ENCODE measurements at regions of chr3 and their contacts with region 1.

Region 1: GRCh38 chr3:49673715-49674496 is at the start of gene APEH:
- DNase-seq: peak; percentile 92 to 98 (median 96)
- ATAC-seq: peak; percentile 86
- H3K4me3 ChIP-seq: peak within 1 kb of the TSS; percentile 81
- H3K4me3 Mint-ChIP-seq: peak within 1 kb of the TSS; percentile 97
- H3K27ac ChIP-seq: peak within 1 kb of the TSS; percentile 91 to 96
- H3K27ac Mint-ChIP-seq: peak within 1 kb of the TSS; percentile 97
- H3K4me1 ChIP-seq: peaks cover 47% of the 10 kb centered on the region
- H3K4me1 Mint-ChIP-seq: peaks cover 50% of the 10 kb centered on the region
- H3K27me3 ChIP-seq: no peaks in the 10 kb centered on the region
- H3K27me3 Mint-ChIP-seq: no peaks in the 10 kb centered on the region
- CTCF ChIP-seq: no peak
- total RNA-seq, gene APEH: 44.3 to 45.5 TPM

Region 2: DNA sequence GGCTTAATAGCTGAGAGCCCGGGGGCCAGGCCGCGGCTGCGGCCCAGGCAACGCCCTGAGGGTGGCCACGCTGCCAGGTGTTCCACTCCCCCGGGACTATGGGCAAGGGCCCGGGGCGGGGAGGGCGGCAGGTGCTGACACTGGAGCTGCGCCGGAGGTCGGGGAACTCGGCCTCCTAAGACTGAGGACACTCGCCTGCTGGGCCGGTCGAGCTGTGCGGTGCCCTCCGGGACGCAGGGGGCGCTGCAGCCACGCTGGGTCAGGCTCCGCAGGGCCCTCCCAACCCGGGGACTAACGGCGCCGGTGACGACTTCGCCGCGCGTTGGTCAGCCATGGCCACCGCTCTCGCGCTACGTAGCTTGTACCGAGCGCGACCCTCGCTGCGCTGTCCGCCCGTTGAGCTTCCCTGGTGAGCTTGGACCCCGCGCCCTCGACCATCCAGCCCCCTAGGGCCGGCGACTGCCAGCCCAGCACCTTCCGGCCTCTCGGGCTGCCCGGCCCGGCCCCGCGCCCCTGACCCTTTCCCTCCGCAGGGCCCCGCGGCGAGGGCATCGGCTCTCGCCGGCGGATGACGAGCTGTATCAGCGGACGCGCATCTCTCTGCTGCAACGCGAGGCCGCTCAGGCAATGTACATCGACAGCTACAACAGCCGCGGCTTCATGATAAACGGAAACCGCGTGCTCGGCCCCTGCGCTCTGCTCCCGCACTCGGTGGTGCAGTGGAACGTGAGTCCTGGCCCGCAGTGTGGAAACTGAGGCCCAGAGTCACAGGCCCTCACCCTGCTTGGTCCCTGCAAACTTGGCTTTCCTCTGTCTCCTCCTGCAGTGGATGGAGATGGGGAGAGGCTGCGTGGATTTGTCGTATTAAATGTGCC is 651.9 kb before region 1 on chr3 and contains the start of gene NDUFAF3:
- CTCF ChIA-PET with region 1: no interaction called
- POLR2A ChIA-PET with region 1: no interaction called
- intact Hi-C with region 1: loop called in 1 of 2 experiments (anchors 10 kb)
- DNase-seq: peak; percentile 81 to 95 (median 90)
- ATAC-seq: peak; percentile 74
- H3K4me3 ChIP-seq: peak within 1 kb of the TSS; percentile 80
- H3K4me3 Mint-ChIP-seq: peak within 1 kb of the TSS; percentile 95
- H3K27ac ChIP-seq: peak within 1 kb of the TSS; percentile 92 to 98
- H3K27ac Mint-ChIP-seq: peak within 1 kb of the TSS; percentile 90
- H3K4me1 ChIP-seq: peaks cover 63% of the 10 kb centered on the region
- H3K4me1 Mint-ChIP-seq: peaks cover 50% of the 10 kb centered on the region
- H3K27me3 ChIP-seq: no peaks in the 10 kb centered on the region
- H3K27me3 Mint-ChIP-seq: no peaks in the 10 kb centered on the region
- CTCF ChIP-seq: peak; percentile 99
- total RNA-seq, gene NDUFAF3: 52.7 to 53.2 TPM

Region 3: DNA sequence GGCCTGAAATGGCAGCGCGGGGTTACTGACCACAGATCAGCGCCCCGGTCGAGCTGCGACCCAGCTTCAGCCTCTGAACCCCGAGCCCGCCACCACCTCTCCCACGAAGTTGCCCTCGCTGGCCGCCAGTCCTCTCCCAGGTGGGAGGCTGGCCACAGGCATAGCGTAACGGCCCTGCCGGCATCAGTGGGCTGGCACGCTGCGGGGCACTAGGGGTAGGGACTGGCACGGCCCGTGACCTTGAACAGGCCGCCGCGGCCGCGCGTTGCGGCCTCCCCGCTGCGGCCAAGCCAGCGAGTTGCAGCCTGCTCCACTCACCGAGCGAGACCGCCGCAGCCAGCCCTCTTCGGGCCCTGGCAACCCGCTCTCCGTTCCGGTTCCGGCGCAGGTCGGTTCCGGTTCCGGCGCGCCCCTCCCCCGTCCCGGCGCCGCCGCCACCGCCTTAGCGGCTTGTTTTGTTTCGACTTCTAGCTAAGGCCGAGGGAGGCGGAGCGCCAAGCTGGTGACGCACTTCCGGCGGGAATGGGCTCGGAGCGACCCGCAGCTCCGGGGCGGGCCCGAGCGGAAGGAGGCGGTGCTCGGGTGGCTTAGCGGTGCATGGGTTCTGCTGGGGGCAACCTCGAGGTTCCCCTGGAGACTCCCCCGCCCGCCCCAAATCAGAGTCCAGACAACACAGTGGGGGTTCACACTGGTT is 553.3 kb before region 1 on chr3 and contains the start of gene USP19:
- CTCF ChIA-PET with region 1: no interaction called
- POLR2A ChIA-PET with region 1: no interaction called
- intact Hi-C with region 1: loop called in 1 of 2 experiments (anchors 10 kb)
- DNase-seq: peak; percentile 86 to 98 (median 94)
- ATAC-seq: peak; percentile 91
- H3K4me3 ChIP-seq: peak within 1 kb of the TSS; percentile 99
- H3K4me3 Mint-ChIP-seq: peak within 1 kb of the TSS; percentile 93
- H3K27ac ChIP-seq: peak within 1 kb of the TSS; percentile 87 to 95
- H3K27ac Mint-ChIP-seq: peak within 1 kb of the TSS; percentile 95
- H3K4me1 ChIP-seq: peaks cover 30% of the 10 kb centered on the region
- H3K4me1 Mint-ChIP-seq: peaks cover 23% of the 10 kb centered on the region
- H3K27me3 ChIP-seq: no peaks in the 10 kb centered on the region
- H3K27me3 Mint-ChIP-seq: no peaks in the 10 kb centered on the region
- CTCF ChIP-seq: no peak
- total RNA-seq, gene USP19: 84.9 to 86.2 TPM

Region 4: GRCh38 chr3:49469936-49470713 is 203.8 kb before region 1 on chr3 and contains the start of gene DAG1:
- CTCF ChIA-PET with region 1: no interaction called
- POLR2A ChIA-PET with region 1: no interaction called
- intact Hi-C with region 1: loop called in 1 of 2 experiments (anchors 5 kb)
- DNase-seq: peak; percentile 88 to 99 (median 94)
- ATAC-seq: peak; percentile 82
- H3K4me3 ChIP-seq: peak within 1 kb of the TSS; percentile 78
- H3K4me3 Mint-ChIP-seq: peak within 1 kb of the TSS; percentile 91
- H3K27ac ChIP-seq: peak within 1 kb of the TSS; percentile 86 to 88
- H3K27ac Mint-ChIP-seq: peak within 1 kb of the TSS; percentile 95
- H3K4me1 ChIP-seq: peaks cover 26% of the 10 kb centered on the region
- H3K4me1 Mint-ChIP-seq: peaks cover 23% of the 10 kb centered on the region
- H3K27me3 ChIP-seq: no peaks in the 10 kb centered on the region
- H3K27me3 Mint-ChIP-seq: no peaks in the 10 kb centered on the region
- CTCF ChIP-seq: no peak
- total RNA-seq, gene DAG1: 15.0 to 18.3 TPM

Region 5: GRCh38 chr3:49539659-49540560 is 134.0 kb before region 1 on chr3:
- CTCF ChIA-PET with region 1: interaction called, 116 read pairs
- POLR2A ChIA-PET with region 1: interaction called, 24 read pairs
- intact Hi-C with region 1: loop called (anchors 1 kb)
- DNase-seq: peak; percentile 81 to 96 (median 92)
- ATAC-seq: peak; percentile 97
- H3K4me3 ChIP-seq: peak overlapping the region; percentile 61
- H3K4me3 Mint-ChIP-seq: peak overlapping the region; percentile 86
- H3K27ac ChIP-seq: peak overlapping the region; percentile 41 to 53
- H3K27ac Mint-ChIP-seq: peak overlapping the region; percentile 63
- H3K4me1 ChIP-seq: peaks cover 11% of the 10 kb centered on the region
- H3K4me1 Mint-ChIP-seq: no peaks in the 10 kb centered on the region
- H3K27me3 ChIP-seq: no peaks in the 10 kb centered on the region
- H3K27me3 Mint-ChIP-seq: peaks cover 12% of the 10 kb centered on the region
- CTCF ChIP-seq: peak; percentile 91

Region 6: GRCh38 chr3:49689046-49689907 is 15.4 kb after region 1 on chr3 and contains the starts of genes MST1 and RNF123:
- CTCF ChIA-PET with region 1: no interaction called
- POLR2A ChIA-PET with region 1: interaction called, 3 read pairs
- intact Hi-C with region 1: loop called in 1 of 2 experiments (anchors 2 kb)
- DNase-seq: peak; percentile 87 to 97 (median 91)
- ATAC-seq: peak; percentile 80
- H3K4me3 ChIP-seq: peak within 1 kb of the TSS; percentile 98
- H3K4me3 Mint-ChIP-seq: peak within 1 kb of the TSS; percentile 97
- H3K27ac ChIP-seq: peak within 1 kb of the TSS; percentile 64 to 87
- H3K27ac Mint-ChIP-seq: peak within 1 kb of the TSS; percentile 91
- H3K4me1 ChIP-seq: peaks cover 49% of the 10 kb centered on the region
- H3K4me1 Mint-ChIP-seq: peaks cover 41% of the 10 kb centered on the region
- H3K27me3 ChIP-seq: no peaks in the 10 kb centered on the region
- H3K27me3 Mint-ChIP-seq: peaks cover 4% of the 10 kb centered on the region
- CTCF ChIP-seq: peak; percentile 55
- total RNA-seq, gene MST1: 7.8 TPM
- total RNA-seq, gene RNF123: 28.8 to 29.7 TPM

Region 7: DNA sequence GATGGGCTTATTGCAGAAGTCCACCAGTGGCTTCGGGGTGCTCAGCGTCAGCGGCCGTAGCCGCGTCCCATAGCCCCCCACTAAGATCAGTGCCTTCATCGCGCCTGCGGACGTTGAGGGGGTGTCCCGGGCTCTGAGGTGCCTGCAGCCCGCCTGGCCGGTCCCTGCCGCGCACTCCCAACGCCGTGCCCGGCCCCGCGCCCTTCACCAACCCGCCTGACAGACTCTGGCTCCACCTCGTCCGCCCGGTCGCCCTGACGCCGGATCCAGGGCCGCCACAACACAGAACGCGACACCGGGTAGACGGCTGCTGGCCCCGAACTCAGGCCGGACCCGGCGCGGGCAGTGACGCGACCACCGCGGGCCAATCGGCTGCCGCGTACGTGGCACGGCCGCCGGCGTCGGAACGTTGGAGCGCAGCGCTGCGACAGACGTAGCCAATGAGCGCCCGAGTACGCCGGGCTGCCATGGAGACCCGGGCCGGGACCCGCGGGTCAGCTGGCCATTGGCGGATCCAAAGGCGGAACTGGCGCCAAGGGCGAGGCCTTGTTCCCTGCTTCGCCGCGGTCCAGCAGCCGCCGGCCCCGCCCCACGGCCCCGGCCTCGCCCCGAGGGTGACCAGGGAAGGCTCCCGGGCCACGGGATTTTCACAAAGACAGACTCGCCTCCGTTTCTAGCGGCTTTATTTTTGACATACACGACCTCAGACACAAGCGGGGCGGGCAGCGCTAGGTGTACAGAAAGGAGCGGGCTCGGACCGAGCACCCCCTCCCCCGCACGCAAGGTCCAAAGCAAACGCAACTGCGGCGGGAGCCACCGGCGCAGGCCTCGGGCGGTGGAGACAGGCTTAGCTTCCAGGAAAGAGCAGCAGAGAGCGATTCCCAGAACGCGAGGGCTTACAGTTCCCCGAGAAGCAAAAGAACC is 50.0 kb after region 1 on chr3 and contains the start of gene GMPPB:
- CTCF ChIA-PET with region 1: interaction called, 3 read pairs
- POLR2A ChIA-PET with region 1: no interaction called
- intact Hi-C with region 1: loop called in 1 of 2 experiments (anchors 1 kb)
- DNase-seq: peak; percentile 81 to 96 (median 88)
- ATAC-seq: peak; percentile 70
- H3K4me3 ChIP-seq: peak within 1 kb of the TSS; percentile 99
- H3K4me3 Mint-ChIP-seq: peak within 1 kb of the TSS; percentile 98
- H3K27ac ChIP-seq: peak within 1 kb of the TSS; percentile 96 to 97
- H3K27ac Mint-ChIP-seq: peak within 1 kb of the TSS; percentile 93
- H3K4me1 ChIP-seq: peaks cover 37% of the 10 kb centered on the region
- H3K4me1 Mint-ChIP-seq: peaks cover 44% of the 10 kb centered on the region
- H3K27me3 ChIP-seq: no peaks in the 10 kb centered on the region
- H3K27me3 Mint-ChIP-seq: no peaks in the 10 kb centered on the region
- CTCF ChIP-seq: no peak
- total RNA-seq, gene GMPPB: 39.0 to 41.4 TPM